ENCODE measurements at regions of chr14 and their contacts with region 1.

Region 1: DNA sequence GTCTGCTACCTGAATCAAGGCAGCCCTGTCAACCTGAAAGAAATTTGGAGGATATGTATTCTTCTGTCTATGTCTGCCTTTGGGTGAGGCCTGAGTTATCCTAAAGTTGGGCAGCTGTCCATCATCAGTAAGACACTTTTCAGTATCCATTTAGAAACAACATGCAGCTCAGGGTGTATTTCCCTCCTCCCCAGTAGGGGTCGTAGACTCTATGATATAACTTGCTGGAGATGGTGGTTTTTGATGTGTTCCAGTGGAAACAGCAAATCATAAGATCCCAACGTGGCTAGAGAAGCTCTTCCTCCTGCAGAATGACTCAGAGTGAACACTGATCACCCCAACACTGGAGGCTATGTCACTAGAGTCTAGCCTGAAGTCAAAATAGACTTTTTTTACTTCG is 331.5 kb upstream of the STXBP6 start:
- DNase-seq: peak; percentile 59
- H3K4me3 ChIP-seq: no peak overlapping the region
- H3K27ac ChIP-seq: no peak overlapping the region
- H3K4me1 ChIP-seq: no peaks in the 10 kb centered on the region
- H3K27me3 ChIP-seq: peaks cover 0 to 29% of the 10 kb centered on the region in 2 experiments
- CTCF ChIP-seq: peak; percentile 52 to 62
- POLR2A ChIP-seq: no peak

Region 2: GRCh38 chr14:25394356-25394755 is 12.9 kb after region 1 on chr14:
- CTCF ChIA-PET with region 1: interaction called, 413 read pairs
- POLR2A ChIA-PET with region 1: interaction called, 3 read pairs
- dilution Hi-C with region 1: no loop called
- intact Hi-C with region 1: loop called (anchors 1 kb)
- DNase-seq: no peak
- H3K4me3 ChIP-seq: no peak overlapping the region
- H3K27ac ChIP-seq: peak overlapping the region; percentile 85
- H3K4me1 ChIP-seq: peaks cover 55% of the 10 kb centered on the region
- H3K27me3 ChIP-seq: no peaks in the 10 kb centered on the region
- CTCF ChIP-seq: no peak
- POLR2A ChIP-seq: no peak

Region 3: GRCh38 chr14:25406818-25407217 is 25.4 kb after region 1 on chr14:
- CTCF ChIA-PET with region 1: interaction called, 413 read pairs
- POLR2A ChIA-PET with region 1: no interaction called
- dilution Hi-C with region 1: no loop called
- intact Hi-C with region 1: loop called (anchors 1 kb)
- DNase-seq: peak; percentile 48
- H3K4me3 ChIP-seq: no peak overlapping the region
- H3K27ac ChIP-seq: no peak overlapping the region
- H3K4me1 ChIP-seq: no peaks in the 10 kb centered on the region
- H3K27me3 ChIP-seq: no peaks in the 10 kb centered on the region
- CTCF ChIP-seq: peak; percentile 59 to 63
- POLR2A ChIP-seq: no peak

Region 4: DNA sequence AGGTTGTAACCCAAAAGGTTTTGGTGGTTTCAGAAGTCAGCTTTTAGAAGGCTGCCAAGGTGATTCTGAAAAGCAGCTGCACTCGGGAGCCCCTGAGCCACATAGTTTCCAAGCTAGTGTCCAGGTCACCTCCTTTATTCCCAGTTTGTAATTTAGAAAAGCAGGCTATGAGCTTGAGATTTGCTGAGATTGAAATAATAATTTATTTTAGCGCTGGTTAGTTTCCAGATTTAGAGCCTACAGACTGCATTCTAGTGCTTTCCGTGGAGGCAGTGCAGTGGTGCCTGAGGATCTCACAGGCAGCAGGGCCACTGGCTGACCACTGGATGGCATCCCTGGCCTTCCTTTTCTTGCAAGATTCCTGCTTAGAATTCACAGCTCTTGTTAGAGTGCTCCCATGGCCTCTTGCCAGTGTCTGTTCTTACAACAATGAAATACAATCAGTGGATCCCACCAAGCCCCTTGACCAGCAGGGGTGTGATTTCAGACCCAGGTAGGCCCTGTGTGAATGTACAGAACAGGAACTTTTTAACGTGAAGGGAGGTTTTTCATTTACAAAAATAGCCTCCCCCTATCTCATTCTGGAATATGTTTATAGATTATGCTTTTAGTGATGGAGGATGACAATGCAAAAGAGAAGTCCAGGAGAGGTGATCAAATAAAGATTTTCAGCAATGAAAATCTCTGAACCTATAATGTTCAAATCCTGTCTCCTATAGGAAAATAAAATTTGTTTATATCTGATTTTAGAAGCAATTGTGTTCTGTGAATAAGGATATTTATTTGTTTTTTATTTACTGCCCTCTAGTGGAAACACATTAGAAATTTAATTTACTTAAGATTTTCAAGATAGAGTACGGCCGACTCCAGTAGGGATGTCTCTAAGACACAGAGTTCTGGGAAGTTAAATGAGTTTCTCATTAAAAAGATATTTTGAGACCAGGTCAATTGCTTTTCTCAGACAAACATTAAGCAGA is 30.6 kb after region 1 on chr14:
- CTCF ChIA-PET with region 1: interaction called, 95 read pairs
- POLR2A ChIA-PET with region 1: no interaction called
- dilution Hi-C with region 1: no loop called
- intact Hi-C with region 1: no loop called
- DNase-seq: no peak
- H3K4me3 ChIP-seq: no peak overlapping the region
- H3K27ac ChIP-seq: no peak overlapping the region
- H3K4me1 ChIP-seq: no peaks in the 10 kb centered on the region
- H3K27me3 ChIP-seq: no peaks in the 10 kb centered on the region
- CTCF ChIP-seq: peak; percentile 5 to 16
- POLR2A ChIP-seq: no peak

Measured in endothelial cell of umbilical vein (primary cell).